MCF 10A (cell line): ENCODE measurements at regions of chr9 and their contacts with region 1.

Region 1: DNA sequence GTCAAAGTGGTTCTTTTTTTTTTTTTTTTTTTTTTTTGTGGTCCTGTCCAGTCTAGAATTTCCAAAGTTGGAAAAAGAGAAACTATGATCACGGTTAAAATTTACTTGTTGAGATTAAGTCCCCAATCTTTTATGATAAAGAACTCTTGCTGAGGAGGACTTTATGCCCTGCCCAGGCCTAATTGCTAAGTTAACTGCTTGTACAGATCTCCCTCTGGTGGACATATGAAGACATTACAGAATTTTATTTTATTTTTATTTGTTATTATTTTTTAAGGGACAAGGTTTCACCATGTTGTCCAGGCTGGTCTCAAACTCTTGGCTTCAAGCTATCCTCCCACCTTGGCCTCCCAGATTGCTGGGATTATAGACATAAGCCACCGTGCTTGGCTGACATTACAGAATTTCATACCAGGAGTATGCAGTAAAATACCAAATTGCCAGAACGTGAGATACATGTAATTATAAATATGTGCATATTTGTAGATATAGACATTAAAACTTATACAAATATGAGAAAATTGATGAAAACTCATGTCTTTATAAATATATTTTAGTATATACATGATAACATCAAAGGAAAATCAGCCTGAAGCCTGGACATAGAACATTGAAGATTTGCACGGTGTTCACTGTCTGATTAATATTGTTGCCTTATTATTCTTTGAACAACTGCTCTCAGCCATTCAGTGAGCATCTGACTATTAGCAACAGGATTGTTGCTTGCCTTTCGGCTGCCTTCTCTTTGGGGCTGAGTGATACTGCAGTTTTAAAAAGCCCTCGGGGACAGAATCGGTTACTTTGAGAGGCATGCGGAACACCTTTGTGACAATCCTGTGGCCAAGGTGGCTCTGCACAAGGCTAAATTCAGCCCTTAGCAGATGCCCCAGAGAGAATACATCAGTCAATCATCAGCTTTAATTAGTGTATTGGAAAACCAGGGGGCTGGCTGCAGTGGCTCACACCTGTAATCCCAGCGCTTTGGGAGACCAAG is 91.0 kb downstream of the RFK start:
- DNase-seq: peak; percentile 56
- H3K4me3 Mint-ChIP-seq: no peak overlapping the region
- H3K27ac Mint-ChIP-seq: no peak overlapping the region
- H3K4me1 Mint-ChIP-seq: no peaks in the 10 kb centered on the region
- H3K27me3 Mint-ChIP-seq: no peaks in the 10 kb centered on the region
- CTCF ChIP-seq: peak; percentile 59

Region 2: DNA sequence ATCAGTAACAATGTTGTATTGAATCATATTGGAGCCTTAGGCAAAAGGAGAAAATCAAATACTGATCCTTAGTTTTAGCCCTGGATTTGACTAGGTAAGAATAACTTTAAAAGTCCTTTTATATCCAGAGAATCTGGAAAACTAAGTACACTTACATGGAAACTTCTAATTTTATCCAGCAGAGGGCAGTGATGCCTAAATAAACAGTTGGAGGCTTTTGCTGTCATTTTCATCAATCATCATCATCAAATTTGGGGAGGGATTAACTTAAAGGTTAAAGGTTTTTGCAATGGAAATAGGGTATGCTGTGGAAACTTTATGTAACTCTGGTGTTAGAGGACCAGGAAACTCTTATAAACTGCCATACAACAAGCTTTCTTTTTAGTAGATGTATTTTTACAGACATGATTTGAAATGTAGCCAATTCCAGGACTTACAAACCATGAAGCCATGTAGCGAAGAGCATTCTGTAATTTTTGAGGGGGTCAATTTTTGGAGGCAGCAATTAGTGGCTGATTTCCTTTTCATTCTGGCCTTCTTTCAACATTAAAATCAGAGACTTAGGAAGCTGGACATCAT is 1102.3 kb before region 1 on chr9:
- CTCF ChIA-PET with region 1: interaction called, 8 read pairs
- POLR2A ChIA-PET with region 1: no interaction called
- intact Hi-C with region 1: loop called (anchors 2 kb)
- DNase-seq: peak; percentile 67
- H3K4me3 Mint-ChIP-seq: no peak overlapping the region
- H3K27ac Mint-ChIP-seq: no peak overlapping the region
- H3K4me1 Mint-ChIP-seq: peaks cover 5% of the 10 kb centered on the region
- H3K27me3 Mint-ChIP-seq: peaks cover 2% of the 10 kb centered on the region
- CTCF ChIP-seq: peak; percentile 61

Region 3: DNA sequence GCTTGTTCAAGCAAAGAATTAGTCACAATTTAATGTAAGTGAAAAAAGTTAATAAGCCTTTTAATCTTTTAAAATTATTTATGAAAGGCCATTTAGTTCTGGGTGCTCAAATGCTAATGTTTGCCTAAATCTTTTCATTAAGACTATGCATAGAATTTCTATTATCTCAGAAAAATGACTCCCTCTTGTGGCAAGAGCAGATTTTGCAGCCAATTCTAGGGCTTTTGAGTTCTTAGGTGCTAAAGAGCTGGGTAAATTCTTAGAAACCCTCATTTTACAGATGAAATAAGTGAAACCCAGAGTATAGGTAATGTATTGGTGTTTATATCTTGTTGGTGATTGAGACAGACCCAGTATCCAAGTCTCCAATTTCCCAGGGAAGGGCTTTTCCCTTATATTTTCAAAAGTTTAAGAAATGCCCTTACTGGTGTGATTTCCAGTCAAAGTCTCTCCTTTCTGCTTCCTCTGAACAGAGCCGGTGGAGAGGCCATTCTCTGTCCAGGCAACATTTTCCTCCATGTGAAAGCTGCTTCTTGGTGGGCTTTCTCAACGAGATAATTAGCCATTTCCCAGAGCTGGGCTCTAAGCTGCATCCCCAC is 436.9 kb before region 1 on chr9:
- CTCF ChIA-PET with region 1: interaction called, 21 read pairs
- POLR2A ChIA-PET with region 1: no interaction called
- intact Hi-C with region 1: no loop called
- DNase-seq: peak; percentile 61
- H3K4me3 Mint-ChIP-seq: no peak overlapping the region
- H3K27ac Mint-ChIP-seq: no peak overlapping the region
- H3K4me1 Mint-ChIP-seq: no peaks in the 10 kb centered on the region
- H3K27me3 Mint-ChIP-seq: no peaks in the 10 kb centered on the region
- CTCF ChIP-seq: peak; percentile 52

Region 4: DNA sequence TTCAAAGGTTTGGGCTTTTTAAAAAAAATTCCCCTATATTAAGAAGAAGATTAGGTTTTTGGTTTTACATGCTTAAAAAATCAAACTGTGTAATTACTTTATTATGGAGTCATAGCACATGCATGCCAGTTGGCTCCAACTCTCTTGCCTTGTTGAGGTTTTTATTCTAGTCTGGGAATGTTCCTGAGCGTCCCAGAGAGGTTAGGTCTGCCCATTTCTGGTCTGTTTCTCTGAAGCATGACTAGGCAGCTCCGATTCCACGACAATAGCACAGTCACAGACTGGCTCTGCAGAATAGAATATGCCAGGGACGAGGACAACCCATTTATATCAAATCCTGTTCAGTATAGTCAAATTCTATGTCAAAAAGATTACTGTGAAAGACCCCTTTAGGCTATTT is 195.8 kb before region 1 on chr9:
- CTCF ChIA-PET with region 1: no interaction called
- POLR2A ChIA-PET with region 1: no interaction called
- intact Hi-C with region 1: no loop called
- DNase-seq: no peak
- H3K4me3 Mint-ChIP-seq: no peak overlapping the region
- H3K27ac Mint-ChIP-seq: no peak overlapping the region
- H3K4me1 Mint-ChIP-seq: no peaks in the 10 kb centered on the region
- H3K27me3 Mint-ChIP-seq: no peaks in the 10 kb centered on the region
- CTCF ChIP-seq: no peak

Region 5: DNA sequence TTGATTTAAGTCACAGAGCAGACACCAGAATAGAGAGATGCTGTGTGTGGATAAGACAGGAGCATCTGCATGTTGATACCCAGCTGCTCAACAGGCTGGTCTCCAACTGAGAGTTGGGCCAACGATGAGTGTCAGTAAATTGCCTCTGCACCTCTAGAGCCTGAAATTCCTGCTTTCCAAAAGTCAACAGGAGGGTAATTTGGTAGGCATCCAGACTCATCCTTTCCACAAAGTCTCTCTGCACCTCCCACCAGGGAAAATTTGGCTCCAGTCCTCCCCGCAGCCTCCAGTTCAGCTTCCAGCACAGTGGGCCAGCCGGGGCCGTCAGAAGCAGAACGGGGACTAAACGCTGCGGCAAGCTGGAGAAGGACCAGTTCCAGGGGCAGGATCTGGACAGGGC is 45.9 kb before region 1 on chr9:
- CTCF ChIA-PET with region 1: interaction called, 10 read pairs
- POLR2A ChIA-PET with region 1: no interaction called
- intact Hi-C with region 1: no loop called
- DNase-seq: no peak
- H3K4me3 Mint-ChIP-seq: no peak overlapping the region
- H3K27ac Mint-ChIP-seq: no peak overlapping the region
- H3K4me1 Mint-ChIP-seq: no peaks in the 10 kb centered on the region
- H3K27me3 Mint-ChIP-seq: no peaks in the 10 kb centered on the region
- CTCF ChIP-seq: no peak

Region 6: GRCh38 chr9:76374702-76375559 is 71.7 kb after region 1 on chr9:
- CTCF ChIA-PET with region 1: interaction called, 6 read pairs
- POLR2A ChIA-PET with region 1: no interaction called
- intact Hi-C with region 1: loop called (anchors 10 kb)
- DNase-seq: peak; percentile 86
- H3K4me3 Mint-ChIP-seq: peak overlapping the region; percentile 16
- H3K27ac Mint-ChIP-seq: peak overlapping the region; percentile 54
- H3K4me1 Mint-ChIP-seq: peaks cover 37% of the 10 kb centered on the region
- H3K27me3 Mint-ChIP-seq: no peaks in the 10 kb centered on the region
- CTCF ChIP-seq: no peak